Left colon (tissue), 2 donors: ENCODE measurements at regions of chr16 and their contacts with region 1.

Region 1: DNA sequence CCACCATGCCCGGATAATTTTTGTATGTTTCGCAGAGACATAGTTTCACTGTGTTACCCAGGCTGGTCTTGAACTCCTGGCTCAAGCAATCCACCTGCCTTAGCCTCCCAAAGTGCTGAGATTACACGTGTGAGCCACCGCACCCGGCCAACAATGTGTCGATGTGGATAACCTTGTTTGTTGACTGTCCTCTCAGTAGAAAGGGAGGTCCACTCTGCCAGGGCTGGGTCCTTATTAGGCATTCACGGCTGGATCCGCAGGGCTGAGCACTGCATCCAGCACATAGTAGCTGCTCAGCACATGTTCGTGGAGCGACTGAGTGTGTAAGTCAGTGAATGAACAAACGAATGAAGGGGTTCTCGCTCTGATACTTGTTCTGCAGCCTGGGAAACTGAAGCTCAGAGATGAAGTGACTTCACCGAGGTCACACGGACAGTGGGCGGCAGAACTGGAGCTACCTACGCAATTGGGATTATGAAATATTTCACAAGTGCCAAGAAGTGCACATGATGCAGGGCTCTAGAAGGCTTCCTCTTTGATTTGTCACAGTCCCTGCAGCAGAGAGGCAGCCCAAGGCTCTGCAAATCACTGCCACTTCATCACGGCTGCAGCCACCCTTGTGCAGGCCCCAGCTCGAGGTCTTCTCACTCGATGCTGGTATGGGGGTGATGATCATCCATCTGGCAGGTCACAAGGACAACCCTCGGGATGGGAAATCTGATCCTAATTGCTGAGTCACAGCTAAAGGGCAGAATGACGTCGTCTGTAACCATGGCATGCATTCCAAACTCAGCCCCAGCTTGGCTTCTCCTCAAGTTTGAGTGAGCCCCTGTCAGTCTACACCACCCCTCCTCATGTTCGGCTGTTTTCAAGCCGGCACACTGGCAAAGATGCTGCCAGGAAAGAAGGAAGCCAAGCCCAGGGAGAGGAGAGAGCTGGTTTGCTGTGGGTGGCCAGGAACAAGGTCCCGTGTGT is 28.0 kb upstream of the SNN start:
- DNase-seq: peak in 1 of 2 donors; percentile 70
- ATAC-seq: no peak

Region 2: GRCh38 chr16:11407047-11407982 is 232.9 kb before region 1 on chr16:
- intact Hi-C with region 1: loop called (anchors 5 to 10 kb)
- DNase-seq: peak in 1 of 2 donors; percentile 80
- ATAC-seq: peak; percentile 86

Region 3: DNA sequence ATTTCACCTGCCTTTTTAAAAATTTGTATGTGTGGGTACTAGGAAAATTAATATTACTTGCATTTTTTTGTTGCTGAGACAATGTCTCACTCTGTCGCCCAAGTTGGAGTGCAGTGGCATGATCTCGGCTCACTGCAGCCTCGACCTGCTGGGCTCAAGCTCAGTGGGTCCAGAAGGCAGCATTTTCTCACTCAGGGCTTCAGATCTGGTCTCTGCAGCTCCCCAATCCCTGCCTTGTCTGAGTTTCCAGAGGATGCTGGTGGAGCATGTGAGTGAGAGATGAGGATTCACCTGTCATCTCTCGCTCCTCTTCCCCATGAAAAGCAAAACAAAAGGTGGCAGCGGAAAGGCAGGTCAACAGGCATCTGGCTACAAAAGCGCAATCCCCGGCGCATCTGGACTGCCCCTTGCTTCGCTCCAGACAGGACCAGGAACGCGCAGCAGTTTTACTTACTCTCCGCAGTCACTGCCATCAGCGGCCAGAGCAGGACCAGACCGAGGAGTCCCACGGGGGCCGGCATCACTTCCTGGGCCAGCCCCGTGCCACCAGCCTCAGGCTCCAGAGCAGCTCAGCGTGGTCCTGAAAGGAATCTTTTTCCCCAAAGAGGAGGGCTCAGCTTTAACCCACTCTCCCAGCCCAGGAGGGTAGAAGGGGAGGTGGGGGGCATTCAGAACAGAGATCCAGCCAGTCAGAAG is 113.4 kb before region 1 on chr16:
- intact Hi-C with region 1: loop called (anchors 5 to 10 kb)
- DNase-seq: no peak
- ATAC-seq: no peak

Region 4: GRCh38 chr16:11534262-11534661 is 106.0 kb before region 1 on chr16:
- intact Hi-C with region 1: loop called (anchors 5 to 10 kb)
- DNase-seq: no peak
- ATAC-seq: peak; percentile 47